ENCODE measurements at regions of chr5 and their contacts with region 1.

Region 1: GRCh38 chr5:73591102-73591695 is 25.7 kb downstream of the UTP15 start:
- DNase-seq: peak; percentile 78
- H3K4me3 ChIP-seq: no peak overlapping the region
- H3K27ac ChIP-seq: no peak overlapping the region
- H3K27me3 ChIP-seq: no peaks in the 10 kb centered on the region
- CTCF ChIP-seq: peak; percentile 72

Region 2: DNA sequence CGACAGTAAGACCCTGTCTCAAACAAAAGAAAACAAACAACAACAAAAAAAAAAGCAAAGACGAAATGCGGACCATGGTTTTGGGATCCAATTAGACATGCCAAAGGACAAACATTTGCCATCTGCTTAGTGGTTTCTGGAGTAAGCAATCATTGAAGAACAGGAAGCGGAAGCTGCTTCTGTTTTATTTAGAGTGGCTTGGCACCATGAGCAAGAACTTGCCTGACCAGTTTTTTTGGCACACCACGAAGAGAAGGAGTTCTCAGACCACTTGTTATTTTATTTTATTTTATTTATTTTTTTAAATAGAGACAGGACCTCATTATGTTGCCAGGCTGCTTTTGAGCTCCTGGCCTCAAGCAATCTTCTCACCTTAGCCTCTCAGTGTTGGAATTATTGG is 76.0 kb before region 1 on chr5:
- CTCF ChIA-PET with region 1: no interaction called
- POLR2A ChIA-PET with region 1: no interaction called
- DNase-seq: no peak
- H3K4me3 ChIP-seq: no peak overlapping the region
- H3K27ac ChIP-seq: no peak overlapping the region
- H3K27me3 ChIP-seq: no peaks in the 10 kb centered on the region
- CTCF ChIP-seq: no peak

Region 3: GRCh38 chr5:73693481-73694061 is 102.4 kb after region 1 on chr5:
- CTCF ChIA-PET with region 1: interaction called, 40 read pairs
- POLR2A ChIA-PET with region 1: no interaction called
- DNase-seq: peak; percentile 18
- H3K4me3 ChIP-seq: no peak overlapping the region
- H3K27ac ChIP-seq: peak overlapping the region; percentile 39
- H3K27me3 ChIP-seq: no peaks in the 10 kb centered on the region
- CTCF ChIP-seq: peak; percentile 62

Region 4: GRCh38 chr5:73770172-73771025 is 179.2 kb after region 1 on chr5:
- CTCF ChIA-PET with region 1: interaction called, 10 read pairs
- POLR2A ChIA-PET with region 1: interaction called, 6 read pairs
- DNase-seq: no peak
- H3K4me3 ChIP-seq: no peak overlapping the region
- H3K27ac ChIP-seq: no peak overlapping the region
- H3K27me3 ChIP-seq: no peaks in the 10 kb centered on the region
- CTCF ChIP-seq: no peak

Region 5: DNA sequence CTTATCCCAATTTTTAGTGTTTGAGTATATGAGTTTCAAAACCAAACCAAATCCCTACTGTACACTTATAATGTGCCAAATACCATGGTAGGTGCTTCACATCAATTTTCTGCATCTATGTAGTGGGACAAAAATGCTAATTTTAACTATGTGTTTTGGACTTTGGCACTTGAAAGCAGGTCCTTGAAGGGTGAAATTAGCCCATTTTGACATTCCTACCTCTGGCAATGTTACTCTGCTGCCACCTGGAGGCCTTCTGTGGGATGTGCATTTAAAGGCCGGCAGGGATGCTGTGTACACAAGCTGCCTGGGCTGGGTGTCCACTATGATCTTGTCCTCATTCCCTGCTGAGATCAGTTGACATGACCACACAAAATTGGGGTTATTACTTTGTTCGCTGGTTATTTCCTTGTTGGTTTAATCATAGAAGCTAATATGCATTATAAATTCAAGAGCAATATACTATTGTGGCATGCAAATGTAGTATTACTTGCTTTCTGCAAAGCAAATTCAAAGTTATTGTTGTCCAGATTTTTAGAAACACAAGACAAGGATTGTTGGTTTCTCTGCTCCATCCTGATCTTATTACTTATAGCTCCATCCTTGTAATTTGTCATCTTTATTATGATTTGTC is 201.6 kb after region 1 on chr5:
- CTCF ChIA-PET with region 1: interaction called, 352 read pairs
- POLR2A ChIA-PET with region 1: interaction called, 5 read pairs
- DNase-seq: no peak
- H3K4me3 ChIP-seq: no peak overlapping the region
- H3K27ac ChIP-seq: no peak overlapping the region
- H3K27me3 ChIP-seq: no peaks in the 10 kb centered on the region
- CTCF ChIP-seq: peak; percentile 100

Region 6: GRCh38 chr5:73902327-73903051 is 311.3 kb after region 1 on chr5:
- CTCF ChIA-PET with region 1: interaction called, 21 read pairs
- POLR2A ChIA-PET with region 1: no interaction called
- DNase-seq: no peak
- H3K4me3 ChIP-seq: no peak overlapping the region
- H3K27ac ChIP-seq: no peak overlapping the region
- H3K27me3 ChIP-seq: no peaks in the 10 kb centered on the region
- CTCF ChIP-seq: peak; percentile 66